Activated CD4-positive, alpha-beta T cell treated with anti-CD3 and anti-CD28 coated beads for 36 hours (primary cell): ENCODE measurements at regions of chr12 and their contacts with region 1.

Region 1: DNA sequence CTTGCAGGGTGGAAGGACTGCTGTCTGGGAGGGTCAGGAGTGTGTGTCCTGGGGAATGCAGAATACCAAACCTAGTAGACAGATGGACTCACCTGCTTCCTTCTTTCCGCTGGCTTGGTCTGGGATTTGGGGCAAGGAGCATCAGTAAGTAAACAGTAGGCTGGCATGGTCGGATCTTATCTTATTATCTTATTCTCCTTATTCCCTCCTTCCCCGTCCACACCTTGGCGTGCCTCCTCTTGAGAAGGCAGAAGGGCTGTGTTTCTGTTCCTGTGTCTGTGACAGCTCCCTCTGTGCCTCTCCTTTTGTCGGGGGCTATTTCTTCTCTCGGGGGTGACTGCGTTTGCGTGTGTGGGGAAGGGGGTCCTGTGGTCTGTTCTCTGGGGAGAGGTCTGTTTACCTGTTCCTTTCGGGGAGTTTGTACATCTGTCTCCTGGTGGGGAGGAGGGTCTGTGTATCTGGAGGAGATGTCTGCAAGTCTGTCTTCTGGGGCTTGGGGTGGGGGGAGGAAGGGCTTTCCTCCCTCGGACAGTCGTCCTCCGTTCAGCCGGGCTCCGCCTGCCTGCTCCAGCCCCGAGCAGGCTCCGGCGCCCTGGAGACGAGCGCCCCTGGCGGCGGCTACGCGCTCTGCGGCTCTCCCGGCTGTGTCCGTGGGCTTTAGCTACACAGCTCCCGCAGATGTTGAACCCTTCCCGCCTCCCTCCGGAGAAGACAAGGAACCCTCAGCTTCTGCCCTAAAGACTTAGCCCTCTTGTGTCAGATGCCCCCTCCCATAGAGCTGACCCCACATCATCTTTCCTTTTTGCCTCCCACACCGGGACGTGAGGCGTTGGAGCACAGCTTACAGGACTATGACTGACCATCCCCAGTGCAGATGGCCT is 4.3 kb downstream of the KRT86 start:
- DNase-seq: peak; percentile 85
- ATAC-seq: peak; percentile 99
- H3K4me3 Mint-ChIP-seq: no peak overlapping the region
- H3K27ac Mint-ChIP-seq: no peak overlapping the region
- H3K4me1 Mint-ChIP-seq: peaks cover 3% of the 10 kb centered on the region
- H3K27me3 Mint-ChIP-seq: peaks cover 48% of the 10 kb centered on the region

Region 2: DNA sequence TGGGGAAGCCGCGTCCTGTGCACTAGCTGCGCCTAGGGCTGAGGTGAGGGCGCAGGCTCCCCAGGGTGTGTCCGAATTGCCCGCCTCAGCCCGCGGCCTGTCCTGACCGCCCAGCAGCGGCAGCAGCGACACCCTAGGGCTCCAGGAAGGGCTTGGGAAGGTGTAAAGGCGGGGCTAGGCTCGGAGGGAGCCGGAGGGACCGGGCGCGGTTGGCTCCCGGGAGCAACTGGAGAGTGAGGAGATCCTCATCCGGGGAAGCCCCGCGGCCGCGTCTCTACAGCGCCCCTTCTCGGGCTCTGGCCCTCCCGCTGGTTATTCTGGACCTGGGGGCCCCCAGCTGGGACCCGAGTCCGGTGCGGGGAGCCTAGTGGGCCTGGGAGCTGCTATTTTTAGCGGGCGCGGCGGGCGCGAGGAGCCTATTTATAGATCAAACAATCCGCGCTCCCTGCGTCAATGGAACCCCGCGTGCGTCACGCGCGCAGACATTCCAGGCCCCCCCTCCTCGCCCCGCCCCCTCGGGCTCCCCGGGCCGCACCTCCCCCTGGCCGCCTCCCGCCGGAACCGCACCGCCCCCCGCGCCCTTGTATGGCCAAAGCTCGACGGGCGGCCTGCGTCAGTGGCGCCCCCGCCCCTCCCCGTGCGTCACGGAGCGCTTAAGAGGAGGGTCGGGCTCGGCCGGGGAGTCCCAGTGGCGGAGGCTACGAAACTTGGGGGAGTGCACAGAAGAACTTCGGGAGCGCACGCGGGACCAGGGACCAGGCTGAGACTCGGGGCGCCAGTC is 227.8 kb before region 1 on chr12 and contains the start of gene NR4A1:
- CTCF ChIA-PET with region 1: no interaction called
- POLR2A ChIA-PET with region 1: no interaction called
- intact Hi-C with region 1: no loop called
- DNase-seq: peak; percentile 100
- ATAC-seq: peak; percentile 88
- H3K4me3 Mint-ChIP-seq: peak within 1 kb of the TSS; percentile 92
- H3K27ac Mint-ChIP-seq: peak within 1 kb of the TSS; percentile 91
- H3K4me1 Mint-ChIP-seq: peaks cover 38% of the 10 kb centered on the region
- H3K27me3 Mint-ChIP-seq: no peaks in the 10 kb centered on the region
- total RNA-seq, gene NR4A1: 69.4 to 72.8 TPM

Region 3: GRCh38 chr12:52156736-52157565 is 121.8 kb before region 1 on chr12:
- CTCF ChIA-PET with region 1: interaction called, 8 read pairs
- POLR2A ChIA-PET with region 1: no interaction called
- intact Hi-C with region 1: loop called in 1 of 2 experiments (anchors 2 kb)
- DNase-seq: peak; percentile 85
- ATAC-seq: peak; percentile 65
- H3K4me3 Mint-ChIP-seq: no peak overlapping the region
- H3K27ac Mint-ChIP-seq: no peak overlapping the region
- H3K4me1 Mint-ChIP-seq: peaks cover 27% of the 10 kb centered on the region
- H3K27me3 Mint-ChIP-seq: no peaks in the 10 kb centered on the region

Region 4: GRCh38 chr12:52259847-52260246 is 18.9 kb before region 1 on chr12:
- CTCF ChIA-PET with region 1: interaction called, 6 read pairs
- POLR2A ChIA-PET with region 1: no interaction called
- intact Hi-C with region 1: loop called in 1 of 2 experiments (anchors 1 kb)
- DNase-seq: no peak
- ATAC-seq: no peak
- H3K4me3 Mint-ChIP-seq: no peak overlapping the region
- H3K27ac Mint-ChIP-seq: no peak overlapping the region
- H3K4me1 Mint-ChIP-seq: peaks cover 2% of the 10 kb centered on the region
- H3K27me3 Mint-ChIP-seq: peaks cover 64% of the 10 kb centered on the region

Region 5: GRCh38 chr12:52293926-52294325 is 15.1 kb after region 1 on chr12:
- CTCF ChIA-PET with region 1: interaction called, 10 read pairs
- POLR2A ChIA-PET with region 1: no interaction called
- intact Hi-C with region 1: no loop called
- DNase-seq: no peak
- ATAC-seq: no peak
- H3K4me3 Mint-ChIP-seq: no peak overlapping the region
- H3K27ac Mint-ChIP-seq: no peak overlapping the region
- H3K4me1 Mint-ChIP-seq: no peaks in the 10 kb centered on the region
- H3K27me3 Mint-ChIP-seq: peaks cover 11% of the 10 kb centered on the region

Region 6: DNA sequence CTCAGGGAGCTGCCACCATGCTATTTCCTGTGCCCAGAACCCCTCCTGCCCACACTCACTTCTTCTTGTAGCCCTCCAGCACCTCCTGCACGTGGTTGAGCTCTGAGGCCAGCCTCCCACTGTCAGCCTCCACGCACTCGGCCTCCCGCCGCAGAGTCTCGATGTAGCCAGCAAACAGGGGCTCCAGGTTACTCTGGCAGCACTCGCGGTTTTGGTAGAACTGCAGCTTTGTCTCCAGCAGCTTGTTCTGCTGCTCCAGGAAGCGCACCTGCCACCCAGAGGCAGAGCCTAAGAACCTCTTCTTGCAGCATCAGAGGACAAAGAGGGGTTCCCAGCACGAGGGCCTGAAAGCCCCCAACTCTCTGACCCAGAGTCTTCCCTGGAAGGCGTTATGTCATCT is 40.3 kb after region 1 on chr12:
- CTCF ChIA-PET with region 1: interaction called, 6 read pairs
- POLR2A ChIA-PET with region 1: no interaction called
- intact Hi-C with region 1: loop called in 1 of 2 experiments (anchors 5 kb)
- DNase-seq: no peak
- ATAC-seq: no peak
- H3K4me3 Mint-ChIP-seq: no peak overlapping the region
- H3K27ac Mint-ChIP-seq: no peak overlapping the region
- H3K4me1 Mint-ChIP-seq: no peaks in the 10 kb centered on the region
- H3K27me3 Mint-ChIP-seq: peaks cover 18% of the 10 kb centered on the region